ENCODE measurements at regions of chr7 and their contacts with region 1.

Region 1: GRCh38 chr7:144982133-144982532 is 146.3 kb upstream of the TPK1 start:
- DNase-seq: no peak
- ATAC-seq: no peak
- H3K4me3 ChIP-seq: no peak overlapping the region
- H3K27ac ChIP-seq: no peak overlapping the region
- H3K4me1 ChIP-seq: no peaks in the 10 kb centered on the region
- H3K27me3 ChIP-seq: no peaks in the 10 kb centered on the region

Region 2: DNA sequence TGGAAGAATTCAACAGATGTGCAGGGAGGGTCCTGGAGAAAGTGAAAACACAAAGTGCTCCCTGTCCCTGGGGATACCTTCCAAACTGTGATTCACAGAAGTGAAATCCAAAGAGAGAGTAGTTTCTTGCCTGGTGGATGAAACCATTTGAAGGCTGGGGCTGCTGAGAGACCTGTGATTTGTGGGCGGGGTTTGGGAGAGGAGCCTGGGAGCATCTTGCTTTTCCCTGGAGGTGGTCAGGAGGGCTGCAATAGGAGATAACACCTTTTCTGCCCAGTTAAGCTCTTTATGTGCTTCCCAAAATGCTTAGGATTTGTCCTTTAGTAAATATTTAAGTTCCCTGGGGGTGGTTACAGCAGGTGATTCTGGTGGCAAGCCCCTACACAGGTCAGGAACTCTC is 41.0 kb before region 1 on chr7:
- intact Hi-C with region 1: loop called in 1 of 2 experiments (anchors 5 kb)
- DNase-seq: no peak
- ATAC-seq: no peak
- H3K4me3 ChIP-seq: no peak overlapping the region
- H3K27ac ChIP-seq: no peak overlapping the region
- H3K4me1 ChIP-seq: no peaks in the 10 kb centered on the region
- H3K27me3 ChIP-seq: no peaks in the 10 kb centered on the region

Region 3: GRCh38 chr7:144955422-144955821 is 26.7 kb before region 1 on chr7:
- intact Hi-C with region 1: no loop called
- DNase-seq: no peak
- ATAC-seq: no peak
- H3K4me3 ChIP-seq: no peak overlapping the region
- H3K27ac ChIP-seq: no peak overlapping the region
- H3K4me1 ChIP-seq: no peaks in the 10 kb centered on the region
- H3K27me3 ChIP-seq: no peaks in the 10 kb centered on the region

Region 4: GRCh38 chr7:145134377-145134776 is 152.2 kb after region 1 on chr7:
- intact Hi-C with region 1: no loop called
- DNase-seq: no peak
- ATAC-seq: no peak
- H3K4me3 ChIP-seq: no peak overlapping the region
- H3K27ac ChIP-seq: no peak overlapping the region
- H3K4me1 ChIP-seq: no peaks in the 10 kb centered on the region
- H3K27me3 ChIP-seq: no peaks in the 10 kb centered on the region

Measured in aorta (tissue), 5 donors.